Activated CD4-positive, alpha-beta T cell treated with anti-CD3 and anti-CD28 coated beads for 36 hours (primary cell): ENCODE measurements at regions of chr15 and their contacts with region 1.

Region 1: DNA sequence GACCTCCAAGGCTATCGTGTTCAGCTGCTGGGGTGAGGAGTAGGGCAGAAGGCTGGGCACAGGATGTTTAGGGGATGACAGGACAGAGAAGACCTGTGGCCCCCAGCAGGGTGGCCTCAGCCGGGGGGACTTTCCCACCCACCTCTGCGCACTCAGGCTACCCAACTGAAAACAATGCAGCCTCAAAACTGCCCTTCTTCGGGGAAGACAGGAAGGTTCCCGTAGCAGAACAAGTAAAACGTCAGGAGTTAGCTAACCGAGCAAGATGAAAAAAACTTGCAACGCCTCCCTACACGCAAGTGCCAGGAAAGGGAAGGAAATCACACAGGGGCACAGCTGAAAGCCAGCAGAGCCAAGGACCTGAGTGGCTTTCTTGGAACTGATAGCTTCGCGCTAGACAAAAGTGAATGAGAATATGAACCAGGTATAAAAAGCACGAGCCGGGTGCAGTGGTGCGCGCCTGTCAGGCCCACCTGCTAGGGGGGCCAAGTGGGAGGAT is 38.4 kb upstream of the FURIN start:
- DNase-seq: peak; percentile 89
- ATAC-seq: peak; percentile 87
- H3K4me3 Mint-ChIP-seq: peak overlapping the region; percentile 66
- H3K27ac Mint-ChIP-seq: peak overlapping the region; percentile 99
- H3K4me1 Mint-ChIP-seq: peaks cover 54% of the 10 kb centered on the region
- H3K27me3 Mint-ChIP-seq: no peaks in the 10 kb centered on the region

Region 2: DNA sequence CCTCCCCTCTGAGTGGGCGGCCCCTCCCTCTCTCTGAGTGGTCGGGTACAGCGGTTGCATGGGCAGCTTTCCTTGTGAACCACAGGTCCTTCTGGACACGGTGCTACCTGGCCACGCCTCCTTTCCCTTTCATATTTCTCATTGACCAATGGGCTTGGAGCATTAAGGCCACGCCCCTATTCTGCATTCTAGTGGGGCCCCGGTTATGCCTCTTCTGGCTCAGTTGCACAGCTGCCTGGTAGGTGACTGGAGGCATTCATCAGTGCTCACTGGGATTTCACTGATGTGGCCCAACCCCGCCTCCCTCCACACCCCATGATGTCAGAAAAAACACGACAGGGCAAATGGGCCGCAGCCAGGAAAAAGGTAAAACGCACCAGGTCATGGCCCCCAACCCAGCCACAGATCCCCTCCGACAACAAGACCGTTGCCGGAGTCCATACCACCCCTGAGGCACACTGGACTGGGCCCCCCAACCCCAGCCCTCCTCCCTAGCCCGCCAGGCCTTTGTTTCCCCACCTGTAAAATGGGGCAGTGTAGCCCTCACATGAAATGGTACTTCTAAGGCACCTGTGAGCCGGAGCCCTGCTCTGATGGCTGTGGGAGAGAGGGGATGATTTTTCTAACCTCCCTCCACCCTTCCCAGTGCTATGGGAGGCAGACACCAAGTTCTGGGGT is 538.2 kb before region 1 on chr15:
- CTCF ChIA-PET with region 1: no interaction called
- POLR2A ChIA-PET with region 1: no interaction called
- intact Hi-C with region 1: no loop called
- DNase-seq: peak; percentile 45
- ATAC-seq: no peak
- H3K4me3 Mint-ChIP-seq: no peak overlapping the region
- H3K27ac Mint-ChIP-seq: no peak overlapping the region
- H3K4me1 Mint-ChIP-seq: no peaks in the 10 kb centered on the region
- H3K27me3 Mint-ChIP-seq: no peaks in the 10 kb centered on the region

Region 3: GRCh38 chr15:90818251-90819210 is 11.5 kb before region 1 on chr15:
- CTCF ChIA-PET with region 1: interaction called, 4 read pairs
- POLR2A ChIA-PET with region 1: interaction called, 7 read pairs
- intact Hi-C with region 1: loop called in 1 of 2 experiments (anchors 2 kb)
- DNase-seq: peak; percentile 56
- ATAC-seq: peak; percentile 47
- H3K4me3 Mint-ChIP-seq: no peak overlapping the region
- H3K27ac Mint-ChIP-seq: peak overlapping the region; percentile 90
- H3K4me1 Mint-ChIP-seq: peaks cover 44% of the 10 kb centered on the region
- H3K27me3 Mint-ChIP-seq: no peaks in the 10 kb centered on the region

Region 4: GRCh38 chr15:90851114-90851513 is 21.1 kb after region 1 on chr15:
- CTCF ChIA-PET with region 1: interaction called, 11 read pairs
- POLR2A ChIA-PET with region 1: interaction called, 20 read pairs
- intact Hi-C with region 1: loop called (anchors 1 kb)
- DNase-seq: peak; percentile 69
- ATAC-seq: peak; percentile 33
- H3K4me3 Mint-ChIP-seq: peak overlapping the region; percentile 41
- H3K27ac Mint-ChIP-seq: peak overlapping the region; percentile 95
- H3K4me1 Mint-ChIP-seq: peaks cover 53% of the 10 kb centered on the region
- H3K27me3 Mint-ChIP-seq: no peaks in the 10 kb centered on the region

Region 5: GRCh38 chr15:90862964-90863778 is 33.2 kb after region 1 on chr15:
- CTCF ChIA-PET with region 1: interaction called, 6 read pairs
- POLR2A ChIA-PET with region 1: interaction called, 11 read pairs
- intact Hi-C with region 1: no loop called
- DNase-seq: no peak
- ATAC-seq: no peak
- H3K4me3 Mint-ChIP-seq: no peak overlapping the region
- H3K27ac Mint-ChIP-seq: peak overlapping the region; percentile 85
- H3K4me1 Mint-ChIP-seq: peaks cover 48% of the 10 kb centered on the region
- H3K27me3 Mint-ChIP-seq: peaks cover 5% of the 10 kb centered on the region